Panc1 (cell line): ENCODE measurements at regions of chr11 and their contacts with region 1.

Region 1: GRCh38 chr11:2252018-2252417 is 18.4 kb downstream of the ASCL2 start:
- DNase-seq: no peak
- ATAC-seq: no peak
- H3K4me3 ChIP-seq: no peak overlapping the region
- H3K27ac ChIP-seq: no peak overlapping the region
- H3K4me1 ChIP-seq: no peaks in the 10 kb centered on the region
- H3K27me3 ChIP-seq: no peaks in the 10 kb centered on the region; the same call in 1 of the 2 replicates
- CTCF ChIP-seq: no peak

Region 2: DNA sequence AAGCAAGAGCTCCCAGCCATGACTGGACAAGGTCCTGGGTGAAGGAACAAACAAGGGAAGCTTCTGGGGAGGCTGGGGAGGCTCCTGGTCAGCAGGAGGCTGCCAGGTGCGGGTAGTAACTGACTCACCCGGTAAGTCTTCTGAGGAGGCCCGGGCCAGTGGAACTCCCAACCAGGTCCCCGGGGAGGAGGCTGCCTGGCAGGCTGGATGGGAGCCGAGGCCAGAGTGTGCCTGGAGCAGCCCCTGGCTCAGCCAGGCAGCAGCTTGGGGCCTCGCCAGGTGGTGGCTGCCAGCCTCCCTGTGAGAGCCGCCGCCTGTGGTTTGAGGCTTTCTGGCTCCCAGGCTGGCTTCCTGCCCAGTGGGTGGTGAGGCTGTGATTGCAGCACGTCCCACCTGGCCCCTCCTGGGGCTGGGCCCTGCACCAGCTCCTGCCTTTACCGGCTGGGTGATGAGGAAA is 159.0 kb before region 1 on chr11:
- CTCF ChIA-PET with region 1: no interaction called
- POLR2A ChIA-PET with region 1: no interaction called
- in situ Hi-C with region 1: no loop called
- intact Hi-C with region 1: no loop called
- DNase-seq: no peak
- ATAC-seq: peak; percentile 31
- H3K4me3 ChIP-seq: no peak overlapping the region
- H3K27ac ChIP-seq: no peak overlapping the region
- H3K4me1 ChIP-seq: peaks cover 8% of the 10 kb centered on the region
- H3K27me3 ChIP-seq: no peaks in the 10 kb centered on the region
- CTCF ChIP-seq: no peak

Region 3: DNA sequence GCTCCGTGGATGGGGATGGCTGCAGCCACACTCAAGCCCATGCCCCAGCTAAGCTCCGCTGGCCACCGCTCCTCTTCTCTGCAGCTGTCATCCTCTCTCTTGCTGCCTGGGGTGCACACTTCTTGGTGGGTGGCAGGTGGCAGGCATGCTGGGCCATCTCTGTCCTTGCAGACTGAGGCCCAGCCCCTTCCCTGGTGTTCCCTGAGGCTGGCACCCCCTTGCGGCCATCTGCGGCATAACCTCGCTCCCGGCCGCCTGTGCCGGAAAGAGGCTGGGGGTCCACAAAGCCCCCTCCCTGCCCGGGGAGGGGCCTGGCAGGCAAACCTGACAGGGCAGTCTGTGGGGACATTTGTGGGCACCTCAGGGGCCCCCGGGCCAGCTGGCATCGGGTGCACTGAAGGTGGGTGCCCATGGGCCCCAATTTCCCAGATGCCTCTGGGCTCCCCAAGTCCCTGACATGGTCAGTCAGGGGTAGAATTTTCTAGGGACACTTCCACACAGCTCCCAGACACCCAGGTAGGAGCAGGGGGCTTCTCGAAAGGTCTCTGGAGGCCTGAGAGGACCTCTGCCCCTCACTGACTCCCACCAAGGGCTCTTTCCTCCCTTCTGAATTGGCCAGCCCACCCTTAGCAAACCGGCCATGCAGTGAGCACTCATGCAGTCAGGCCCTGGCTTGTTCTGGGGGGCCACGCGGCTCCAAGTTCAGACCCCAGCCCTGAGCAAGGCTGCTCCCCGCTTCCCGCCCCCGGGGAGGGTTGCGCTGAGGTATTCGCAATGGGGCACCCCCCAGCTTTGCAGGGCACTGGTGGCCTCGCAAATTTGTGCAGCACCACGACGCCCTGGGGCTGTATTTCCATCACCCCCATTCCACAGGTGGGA is 56.9 kb before region 1 on chr11:
- CTCF ChIA-PET with region 1: no interaction called
- POLR2A ChIA-PET with region 1: no interaction called
- in situ Hi-C with region 1: no loop called
- intact Hi-C with region 1: no loop called
- DNase-seq: no peak
- ATAC-seq: peak; percentile 63
- H3K4me3 ChIP-seq: no peak overlapping the region
- H3K27ac ChIP-seq: no peak overlapping the region
- H3K4me1 ChIP-seq: peaks cover 7% of the 10 kb centered on the region; the same call in 1 of the 2 replicates
- H3K27me3 ChIP-seq: peaks cover 4% of the 10 kb centered on the region; the same call in 1 of the 2 replicates
- CTCF ChIP-seq: peak; percentile 100

Region 4: DNA sequence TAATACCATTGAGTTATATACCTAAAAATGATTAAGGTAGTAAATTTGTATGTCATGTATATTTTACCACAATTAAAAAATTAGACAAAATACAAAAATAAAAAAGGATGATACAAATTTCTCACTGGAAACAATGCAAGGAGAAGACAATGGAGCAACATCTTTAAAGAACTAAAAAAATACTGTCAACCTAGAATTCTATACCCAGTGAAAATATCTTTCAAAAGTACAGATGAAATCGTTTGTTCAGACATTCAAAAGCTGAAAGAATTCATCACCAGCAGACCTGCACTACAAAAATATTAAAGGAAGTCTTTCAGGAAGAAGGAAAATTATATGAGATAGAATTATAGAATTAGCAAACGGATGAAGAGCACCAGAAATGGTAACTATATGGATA is 28.2 kb after region 1 on chr11:
- CTCF ChIA-PET with region 1: interaction called, 10 read pairs
- POLR2A ChIA-PET with region 1: no interaction called
- in situ Hi-C with region 1: no loop called
- intact Hi-C with region 1: no loop called
- DNase-seq: no peak
- ATAC-seq: no peak
- H3K4me3 ChIP-seq: no peak overlapping the region
- H3K27ac ChIP-seq: no peak overlapping the region
- H3K4me1 ChIP-seq: no peaks in the 10 kb centered on the region
- H3K27me3 ChIP-seq: peaks cover 36% of the 10 kb centered on the region
- CTCF ChIP-seq: no peak